Caco-2 (cell line): ENCODE measurements at regions of chr7 and their contacts with region 1.

Region 1: GRCh38 chr7:123797673-123798527 is 47.1 kb upstream of the HYAL4 start:
- DNase-seq: peak; percentile 44 to 60
- H3K4me3 ChIP-seq: no peak overlapping the region
- H3K4me3 Mint-ChIP-seq: peak overlapping the region; percentile 23
- H3K27ac Mint-ChIP-seq: peak overlapping the region; percentile 18
- H3K4me1 ChIP-seq: peaks cover 36% of the 10 kb centered on the region
- H3K4me1 Mint-ChIP-seq: peaks cover 37% of the 10 kb centered on the region
- H3K27me3 ChIP-seq: no peaks in the 10 kb centered on the region
- H3K27me3 Mint-ChIP-seq: no peaks in the 10 kb centered on the region
- CTCF ChIP-seq: peak in 1 of 2 experiments; percentile 49

Region 2: GRCh38 chr7:123615344-123615743 is 182.6 kb before region 1 on chr7:
- CTCF ChIA-PET with region 1: no interaction called
- POLR2A ChIA-PET with region 1: no interaction called
- intact Hi-C with region 1: loop called (anchors 2 kb)
- DNase-seq: peak; percentile 60 to 66
- H3K4me3 ChIP-seq: no peak overlapping the region
- H3K4me3 Mint-ChIP-seq: peak overlapping the region; percentile 39
- H3K27ac Mint-ChIP-seq: peak overlapping the region; percentile 63
- H3K4me1 ChIP-seq: peaks cover 48% of the 10 kb centered on the region
- H3K4me1 Mint-ChIP-seq: peaks cover 32% of the 10 kb centered on the region
- H3K27me3 ChIP-seq: no peaks in the 10 kb centered on the region
- H3K27me3 Mint-ChIP-seq: no peaks in the 10 kb centered on the region
- CTCF ChIP-seq: no peak

Region 3: DNA sequence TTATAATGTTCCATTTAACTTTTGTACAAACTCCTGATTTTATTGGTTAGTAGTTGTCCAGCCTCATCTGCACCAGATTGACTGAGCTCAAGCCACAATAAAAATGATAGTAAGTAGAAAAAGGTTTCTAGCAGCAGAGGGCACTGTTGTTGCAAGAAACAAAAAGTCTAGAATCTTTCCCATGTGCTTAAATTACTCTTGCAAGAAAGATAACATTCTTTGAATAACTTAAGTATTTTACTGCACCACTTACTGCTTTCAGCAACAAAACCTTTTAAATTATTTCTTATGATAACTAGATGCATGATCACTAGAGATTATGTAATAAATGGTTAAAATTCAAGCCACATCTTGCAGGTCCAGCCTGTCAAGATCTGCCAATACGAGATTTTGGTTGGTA is 115.2 kb before region 1 on chr7:
- CTCF ChIA-PET with region 1: interaction called, 7 read pairs
- POLR2A ChIA-PET with region 1: no interaction called
- intact Hi-C with region 1: loop called (anchors 1 kb)
- DNase-seq: peak in 1 of 2 experiments; percentile 54
- H3K4me3 ChIP-seq: no peak overlapping the region
- H3K4me3 Mint-ChIP-seq: no peak overlapping the region
- H3K27ac Mint-ChIP-seq: no peak overlapping the region
- H3K4me1 ChIP-seq: peaks cover 19% of the 10 kb centered on the region
- H3K4me1 Mint-ChIP-seq: no peaks in the 10 kb centered on the region
- H3K27me3 ChIP-seq: no peaks in the 10 kb centered on the region
- H3K27me3 Mint-ChIP-seq: no peaks in the 10 kb centered on the region
- CTCF ChIP-seq: peak; percentile 47 to 61

Region 4: GRCh38 chr7:123748734-123749536 is 49.0 kb before region 1 on chr7 and contains the start of gene WASL:
- CTCF ChIA-PET with region 1: no interaction called
- POLR2A ChIA-PET with region 1: interaction called, 6 read pairs
- intact Hi-C with region 1: loop called (anchors 1 kb)
- DNase-seq: peak; percentile 93 to 96
- H3K4me3 ChIP-seq: peak within 1 kb of the TSS; percentile 100
- H3K4me3 Mint-ChIP-seq: peak within 1 kb of the TSS; percentile 100
- H3K27ac Mint-ChIP-seq: peak within 1 kb of the TSS; percentile 98
- H3K4me1 ChIP-seq: peaks cover 20% of the 10 kb centered on the region
- H3K4me1 Mint-ChIP-seq: peaks cover 30% of the 10 kb centered on the region
- H3K27me3 ChIP-seq: no peaks in the 10 kb centered on the region
- H3K27me3 Mint-ChIP-seq: no peaks in the 10 kb centered on the region
- CTCF ChIP-seq: no peak
- total RNA-seq, gene WASL: 42.3 TPM in 2 replicates

Region 5: GRCh38 chr7:123823898-123824753 is 26.2 kb after region 1 on chr7:
- CTCF ChIA-PET with region 1: interaction called, 6 read pairs
- POLR2A ChIA-PET with region 1: no interaction called
- intact Hi-C with region 1: loop called (anchors 1 kb)
- DNase-seq: no peak
- H3K4me3 ChIP-seq: no peak overlapping the region
- H3K4me3 Mint-ChIP-seq: peak overlapping the region; percentile 12
- H3K27ac Mint-ChIP-seq: peak overlapping the region; percentile 41
- H3K4me1 ChIP-seq: peaks cover 15% of the 10 kb centered on the region
- H3K4me1 Mint-ChIP-seq: peaks cover 16% of the 10 kb centered on the region
- H3K27me3 ChIP-seq: no peaks in the 10 kb centered on the region
- H3K27me3 Mint-ChIP-seq: no peaks in the 10 kb centered on the region
- CTCF ChIP-seq: no peak

Region 6: DNA sequence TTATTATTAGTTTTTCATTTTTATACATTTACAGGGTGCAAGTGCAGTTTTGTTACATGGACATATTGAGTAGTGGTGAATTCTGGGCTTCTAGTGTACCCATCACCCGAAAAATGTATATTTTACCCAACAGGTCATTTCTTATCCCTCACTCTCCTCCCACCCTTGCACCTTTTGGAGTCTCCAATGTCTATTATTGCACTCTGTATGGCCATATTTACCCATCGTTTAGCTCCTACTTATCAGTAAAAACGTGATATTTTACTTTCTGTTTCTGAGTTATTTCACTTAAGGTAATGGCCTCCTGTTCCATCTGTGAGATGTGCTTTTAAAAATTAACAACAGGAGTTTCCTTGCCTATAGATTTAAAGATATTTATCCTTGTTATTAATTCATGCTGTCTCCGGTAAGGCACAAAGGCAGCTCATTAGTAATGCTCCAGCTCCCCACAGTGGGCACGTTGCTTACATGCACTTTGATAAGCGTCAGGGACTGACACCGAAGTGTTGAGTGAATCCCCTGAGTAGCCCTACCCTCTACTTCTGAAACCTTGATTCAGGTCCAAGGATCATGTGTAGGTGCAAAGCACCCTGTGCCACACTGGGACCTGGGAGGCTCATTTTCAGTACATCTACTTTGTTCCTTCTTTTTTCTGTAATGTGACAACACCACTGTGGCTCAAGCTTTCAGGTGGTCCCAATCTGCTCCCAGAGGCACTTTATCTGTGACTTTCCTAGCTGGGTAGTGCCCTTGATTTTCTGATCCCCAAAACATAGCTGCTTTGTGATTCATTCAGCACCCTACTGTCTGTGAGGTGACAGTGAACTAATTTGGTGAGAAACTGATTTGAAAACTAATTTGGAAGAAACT is 74.3 kb after region 1 on chr7:
- CTCF ChIA-PET with region 1: interaction called, 8 read pairs
- POLR2A ChIA-PET with region 1: no interaction called
- intact Hi-C with region 1: loop called (anchors 1 kb)
- DNase-seq: peak; percentile 68 to 70
- H3K4me3 ChIP-seq: no peak overlapping the region
- H3K4me3 Mint-ChIP-seq: no peak overlapping the region
- H3K27ac Mint-ChIP-seq: no peak overlapping the region
- H3K4me1 ChIP-seq: no peaks in the 10 kb centered on the region
- H3K4me1 Mint-ChIP-seq: no peaks in the 10 kb centered on the region
- H3K27me3 ChIP-seq: no peaks in the 10 kb centered on the region
- H3K27me3 Mint-ChIP-seq: peaks cover 2% of the 10 kb centered on the region
- CTCF ChIP-seq: peak; percentile 77 to 80

Region 7: DNA sequence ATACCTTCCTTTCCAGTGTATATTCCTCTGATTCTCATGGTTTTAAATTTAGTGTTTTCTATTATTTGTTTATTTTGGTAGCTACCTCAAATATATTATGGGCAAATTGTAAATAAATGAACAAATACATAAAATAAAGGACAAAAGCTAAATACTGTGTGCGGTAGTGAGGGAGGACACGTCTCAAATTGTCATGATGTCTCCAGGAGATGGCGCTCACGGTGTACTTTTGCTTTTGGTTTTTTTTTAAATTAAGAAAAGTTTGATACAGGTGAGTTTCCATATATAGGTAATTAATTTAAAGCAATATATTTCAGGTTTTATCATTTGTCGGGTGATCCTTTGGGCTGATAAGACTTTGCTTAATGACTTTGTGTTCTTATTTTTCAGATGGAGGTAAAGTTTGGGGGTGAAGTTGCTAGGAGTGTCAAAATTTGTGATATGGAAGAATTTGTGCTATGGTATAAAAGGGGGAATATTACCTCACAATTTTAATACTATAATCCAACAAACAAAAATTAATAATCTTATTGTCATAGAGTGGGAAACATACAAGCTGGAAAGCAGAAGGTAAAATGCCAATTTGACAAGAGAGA is 303.4 kb after region 1 on chr7:
- CTCF ChIA-PET with region 1: no interaction called
- POLR2A ChIA-PET with region 1: no interaction called
- intact Hi-C with region 1: no loop called
- DNase-seq: no peak
- H3K4me3 ChIP-seq: no peak overlapping the region
- H3K4me3 Mint-ChIP-seq: no peak overlapping the region
- H3K27ac Mint-ChIP-seq: no peak overlapping the region
- H3K4me1 ChIP-seq: no peaks in the 10 kb centered on the region
- H3K4me1 Mint-ChIP-seq: no peaks in the 10 kb centered on the region
- H3K27me3 ChIP-seq: no peaks in the 10 kb centered on the region
- H3K27me3 Mint-ChIP-seq: no peaks in the 10 kb centered on the region
- CTCF ChIP-seq: peak in 1 of 2 experiments; percentile 29